Heart left ventricle (tissue), 16 donors: ENCODE measurements at regions of chr2 and their contacts with region 1.

Region 1: GRCh38 chr2:27655155-27655951 is 8.1 kb downstream of the SUPT7L start:
- DNase-seq: no peak
- ATAC-seq: no peak
- H3K4me3 ChIP-seq: no peak overlapping the region
- H3K27ac ChIP-seq: no peak overlapping the region
- H3K4me1 ChIP-seq: peaks cover 0 to 11% (median 0%) of the 10 kb centered on the region in 12 donors
- H3K27me3 ChIP-seq: no peaks in the 10 kb centered on the region
- CTCF ChIP-seq: no peak
- POLR2A ChIP-seq: no peak

Region 2: DNA sequence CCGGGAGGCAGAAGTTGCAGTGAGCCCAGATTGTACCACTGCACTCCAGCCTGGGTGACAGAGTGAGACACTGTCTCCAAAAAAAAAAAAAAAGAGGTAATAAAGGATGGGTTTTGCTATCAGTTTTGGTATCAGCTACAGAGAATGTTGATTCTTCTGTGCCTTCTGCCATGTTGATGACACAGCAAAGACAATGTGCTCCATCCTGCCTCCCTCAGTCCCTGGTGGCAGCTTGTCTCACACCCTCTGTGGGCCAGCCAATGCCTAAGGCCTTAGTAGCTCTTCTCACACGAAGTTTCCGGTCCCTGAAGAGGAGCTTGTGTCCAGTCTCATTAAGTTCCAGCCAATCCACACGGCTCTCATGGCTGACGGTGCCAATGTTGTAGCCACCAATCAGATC is 183.4 kb before region 1 on chr2:
- intact Hi-C with region 1: loop called in 1 of 10 experiments (anchors 10 kb)
- DNase-seq: no peak
- ATAC-seq: no peak
- H3K4me3 ChIP-seq: no peak overlapping the region
- H3K27ac ChIP-seq: no peak overlapping the region
- H3K4me1 ChIP-seq: no peaks in the 10 kb centered on the region
- H3K27me3 ChIP-seq: no peaks in the 10 kb centered on the region
- CTCF ChIP-seq: no peak
- POLR2A ChIP-seq: no peak

Region 3: DNA sequence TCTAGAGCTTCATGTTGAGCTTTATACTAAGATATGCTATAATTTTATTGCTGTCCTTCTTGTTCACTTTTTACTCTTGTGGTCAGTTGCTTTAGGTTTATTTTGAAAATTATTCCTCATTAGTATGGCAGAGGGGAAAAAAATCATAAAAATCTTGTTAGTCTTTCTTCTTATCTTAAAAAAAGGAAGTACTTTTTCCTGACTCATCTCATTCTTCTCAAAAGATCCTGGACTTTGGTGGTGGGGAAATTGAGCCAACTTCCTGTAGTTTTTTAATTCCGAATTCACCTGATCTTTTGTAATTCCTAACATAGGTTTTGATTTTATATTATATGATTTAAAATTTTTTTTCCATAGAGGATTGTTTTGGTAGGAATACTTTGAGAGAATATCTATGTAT is 12.1 kb after region 1 on chr2:
- intact Hi-C with region 1: no loop called
- DNase-seq: no peak
- ATAC-seq: no peak
- H3K4me3 ChIP-seq: no peak overlapping the region
- H3K27ac ChIP-seq: peak overlapping the region in 1 of 12 donors; percentile 63
- H3K4me1 ChIP-seq: peaks cover 0 to 37% (median 21%) of the 10 kb centered on the region in 12 donors
- H3K27me3 ChIP-seq: no peaks in the 10 kb centered on the region
- CTCF ChIP-seq: no peak
- POLR2A ChIP-seq: no peak

Region 4: GRCh38 chr2:27776097-27776496 is 120.7 kb after region 1 on chr2:
- intact Hi-C with region 1: no loop called
- DNase-seq: peak in 3 of 5 donors; percentile 37 to 82 (median 63)
- ATAC-seq: peak in 1 of 4 donors; percentile 17
- H3K4me3 ChIP-seq: no peak overlapping the region
- H3K27ac ChIP-seq: peak overlapping the region in 10 of 12 donors; percentile 27 to 95 (median 76)
- H3K4me1 ChIP-seq: peaks cover 5 to 88% (median 58%) of the 10 kb centered on the region in 12 donors
- H3K27me3 ChIP-seq: no peaks in the 10 kb centered on the region
- CTCF ChIP-seq: no peak
- POLR2A ChIP-seq: no peak

Region 5: DNA sequence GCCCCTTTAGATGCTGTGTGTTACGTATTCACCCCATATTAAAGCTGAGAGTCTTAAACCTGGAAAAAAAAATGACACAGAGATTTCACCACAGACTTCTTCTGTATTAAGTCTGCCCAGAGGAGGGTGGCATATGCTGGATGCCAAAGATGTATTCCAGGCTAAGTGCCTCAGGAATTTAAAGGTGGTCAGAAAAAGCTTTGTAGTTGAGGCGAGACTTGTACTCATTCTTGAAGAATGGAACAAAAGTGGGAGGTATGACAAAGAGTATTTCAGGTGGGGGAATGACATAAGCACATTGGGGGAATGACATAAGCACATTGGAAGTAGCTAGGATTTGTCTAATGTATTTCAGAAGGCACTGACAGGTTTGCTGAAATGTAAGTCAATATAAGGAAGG is 333.8 kb after region 1 on chr2:
- intact Hi-C with region 1: no loop called
- DNase-seq: no peak
- ATAC-seq: no peak
- H3K4me3 ChIP-seq: no peak overlapping the region
- H3K27ac ChIP-seq: peak overlapping the region in 1 of 12 donors; percentile 2
- H3K4me1 ChIP-seq: peaks cover 0 to 39% (median 21%) of the 10 kb centered on the region in 12 donors
- H3K27me3 ChIP-seq: no peaks in the 10 kb centered on the region
- CTCF ChIP-seq: no peak
- POLR2A ChIP-seq: no peak